ENCODE measurements at regions of chr12 and their contacts with region 1.

Region 1: DNA sequence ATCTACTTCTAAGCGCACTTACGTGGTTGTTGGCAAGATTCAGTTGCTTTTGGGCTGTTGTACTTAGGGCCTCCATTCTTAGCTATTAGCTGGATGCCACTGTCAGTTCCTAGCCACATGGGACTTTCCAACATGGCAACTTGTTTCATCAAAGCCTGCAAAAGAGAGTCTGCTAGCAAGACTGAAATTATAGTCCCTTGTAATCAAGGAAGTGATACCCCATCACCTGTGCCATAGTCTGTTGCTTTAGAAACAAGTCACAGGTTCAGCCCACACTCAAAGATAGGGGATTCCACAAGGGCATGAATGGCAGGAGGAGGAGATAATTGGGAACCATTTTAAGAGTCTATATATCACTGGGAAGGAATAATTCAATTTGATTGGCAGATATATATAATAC is 27.1 kb upstream of the SLC17A8 start:
- DNase-seq: no peak
- H3K4me3 ChIP-seq: no peak overlapping the region
- H3K27ac ChIP-seq: no peak overlapping the region
- H3K4me1 ChIP-seq: no peaks in the 10 kb centered on the region
- H3K27me3 ChIP-seq: no peaks in the 10 kb centered on the region
- CTCF ChIP-seq: no peak
- POLR2A ChIP-seq: no peak

Region 2: DNA sequence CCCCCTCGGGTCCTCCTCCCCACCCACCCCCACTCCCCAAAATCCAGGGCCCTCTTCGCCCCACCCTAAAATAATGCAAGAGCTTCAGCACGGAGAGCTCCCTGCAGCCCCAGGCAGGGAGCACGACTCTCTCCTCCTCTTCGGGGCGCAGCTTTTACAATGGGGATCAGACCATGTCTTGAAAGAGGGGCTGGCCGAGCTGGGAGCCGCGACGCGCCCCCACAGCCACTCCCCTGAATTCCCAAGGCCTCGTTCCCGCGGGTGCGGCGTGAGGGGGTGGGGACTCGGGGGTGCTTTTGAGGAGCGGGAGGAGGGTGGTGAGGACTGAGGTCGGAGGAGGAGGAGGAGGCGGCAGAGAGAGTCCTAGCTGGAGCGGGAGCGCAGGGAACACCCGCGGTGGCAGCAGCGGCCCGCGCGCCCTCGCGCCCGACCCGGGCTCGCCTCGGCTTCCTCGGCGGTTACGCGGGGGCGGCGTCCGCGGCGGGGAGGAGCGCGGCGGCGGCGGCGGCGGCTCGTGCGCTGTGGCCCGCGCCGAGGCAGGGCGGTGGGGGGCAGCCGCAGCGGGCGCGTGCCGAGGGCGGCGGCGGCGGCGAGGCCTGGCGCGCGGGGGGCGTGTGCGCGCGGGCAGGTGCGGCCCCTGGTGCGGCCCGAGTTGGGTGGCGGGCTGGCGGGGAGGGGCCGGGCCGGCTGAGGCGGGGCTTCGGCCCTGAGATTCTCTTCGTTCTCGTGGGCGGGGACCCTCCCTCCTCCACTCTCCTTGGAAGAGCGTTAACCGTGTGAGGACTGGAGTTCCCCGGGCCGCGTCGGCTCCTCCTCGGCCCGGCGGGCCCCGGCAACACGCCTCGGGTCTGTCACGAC is 345.3 kb before region 1 on chr12 and contains the start of gene ANKS1B:
- intact Hi-C with region 1: loop called (anchors 5 kb)
- DNase-seq: no peak
- H3K4me3 ChIP-seq: peak within 1 kb of the TSS; percentile 57 to 58
- H3K27ac ChIP-seq: peak within 1 kb of the TSS; percentile 71
- H3K4me1 ChIP-seq: peaks cover 8% of the 10 kb centered on the region
- H3K27me3 ChIP-seq: no peaks in the 10 kb centered on the region
- CTCF ChIP-seq: no peak
- POLR2A ChIP-seq: no peak
- total RNA-seq, gene ANKS1B: 11.5 TPM

Region 3: DNA sequence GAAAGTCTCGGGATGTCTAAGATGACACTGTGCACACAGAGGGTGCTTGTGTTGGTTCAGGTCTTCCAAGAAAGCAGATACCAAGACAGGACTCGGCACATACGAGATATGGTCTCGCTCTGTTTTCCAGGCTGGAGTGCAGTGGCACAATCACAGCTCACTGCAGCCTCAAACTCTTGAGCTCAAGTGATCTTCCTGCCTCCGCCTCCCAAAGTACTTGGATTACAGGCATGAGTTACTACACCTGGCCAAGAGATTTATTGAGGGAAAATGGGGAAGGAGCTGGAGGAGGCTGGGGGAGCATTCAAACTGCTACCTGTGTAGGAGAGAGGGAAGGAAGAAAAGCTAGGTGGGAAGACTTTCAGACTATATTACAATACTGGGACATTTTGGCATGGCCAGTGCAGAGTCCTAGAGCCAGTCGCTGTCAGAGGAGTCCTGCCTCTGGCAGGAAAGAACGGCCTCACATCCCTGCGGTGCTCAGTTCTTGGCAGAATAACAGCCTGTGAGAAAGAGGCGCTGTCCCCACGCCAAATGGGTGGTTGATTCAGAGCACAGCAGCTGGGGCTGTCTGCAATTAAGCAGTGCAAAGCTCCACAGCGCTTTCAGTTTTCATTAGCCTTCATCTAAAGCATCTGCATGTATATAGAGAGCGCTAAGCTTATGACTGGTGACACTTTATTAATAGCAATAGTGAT is 45.4 kb after region 1 on chr12:
- intact Hi-C with region 1: no loop called
- DNase-seq: no peak
- H3K4me3 ChIP-seq: no peak overlapping the region
- H3K27ac ChIP-seq: no peak overlapping the region
- H3K4me1 ChIP-seq: no peaks in the 10 kb centered on the region
- H3K27me3 ChIP-seq: no peaks in the 10 kb centered on the region
- CTCF ChIP-seq: no peak
- POLR2A ChIP-seq: no peak

Measured in vagina (tissue), 2 donors.